Activated CD4-positive, alpha-beta T cell treated with anti-CD3 and anti-CD28 coated beads for 36 hours (primary cell): ENCODE measurements at regions of chrX and their contacts with region 1.

Region 1: GRCh38 chrX:65985922-65986588 is 53.8 kb downstream of the VSIG4 start:
- DNase-seq: peak; percentile 65
- ATAC-seq: peak; percentile 100
- H3K4me3 Mint-ChIP-seq: no peak overlapping the region
- H3K27ac Mint-ChIP-seq: peak overlapping the region; percentile 69
- H3K4me1 Mint-ChIP-seq: peaks cover 21% of the 10 kb centered on the region
- H3K27me3 Mint-ChIP-seq: no peaks in the 10 kb centered on the region

Region 2: GRCh38 chrX:65392284-65392683 is 593.8 kb before region 1 on chrX:
- CTCF ChIA-PET with region 1: no interaction called
- POLR2A ChIA-PET with region 1: no interaction called
- intact Hi-C with region 1: no loop called
- DNase-seq: no peak
- ATAC-seq: no peak
- H3K4me3 Mint-ChIP-seq: no peak overlapping the region
- H3K27ac Mint-ChIP-seq: no peak overlapping the region
- H3K4me1 Mint-ChIP-seq: no peaks in the 10 kb centered on the region
- H3K27me3 Mint-ChIP-seq: no peaks in the 10 kb centered on the region

Region 3: GRCh38 chrX:65581661-65582339 is 404.3 kb before region 1 on chrX:
- CTCF ChIA-PET with region 1: interaction called, 9 read pairs
- POLR2A ChIA-PET with region 1: interaction called, 3 read pairs
- intact Hi-C with region 1: loop called (anchors 1 kb)
- DNase-seq: peak; percentile 70
- ATAC-seq: peak; percentile 64
- H3K4me3 Mint-ChIP-seq: no peak overlapping the region
- H3K27ac Mint-ChIP-seq: no peak overlapping the region
- H3K4me1 Mint-ChIP-seq: peaks cover 8% of the 10 kb centered on the region
- H3K27me3 Mint-ChIP-seq: no peaks in the 10 kb centered on the region

Region 4: DNA sequence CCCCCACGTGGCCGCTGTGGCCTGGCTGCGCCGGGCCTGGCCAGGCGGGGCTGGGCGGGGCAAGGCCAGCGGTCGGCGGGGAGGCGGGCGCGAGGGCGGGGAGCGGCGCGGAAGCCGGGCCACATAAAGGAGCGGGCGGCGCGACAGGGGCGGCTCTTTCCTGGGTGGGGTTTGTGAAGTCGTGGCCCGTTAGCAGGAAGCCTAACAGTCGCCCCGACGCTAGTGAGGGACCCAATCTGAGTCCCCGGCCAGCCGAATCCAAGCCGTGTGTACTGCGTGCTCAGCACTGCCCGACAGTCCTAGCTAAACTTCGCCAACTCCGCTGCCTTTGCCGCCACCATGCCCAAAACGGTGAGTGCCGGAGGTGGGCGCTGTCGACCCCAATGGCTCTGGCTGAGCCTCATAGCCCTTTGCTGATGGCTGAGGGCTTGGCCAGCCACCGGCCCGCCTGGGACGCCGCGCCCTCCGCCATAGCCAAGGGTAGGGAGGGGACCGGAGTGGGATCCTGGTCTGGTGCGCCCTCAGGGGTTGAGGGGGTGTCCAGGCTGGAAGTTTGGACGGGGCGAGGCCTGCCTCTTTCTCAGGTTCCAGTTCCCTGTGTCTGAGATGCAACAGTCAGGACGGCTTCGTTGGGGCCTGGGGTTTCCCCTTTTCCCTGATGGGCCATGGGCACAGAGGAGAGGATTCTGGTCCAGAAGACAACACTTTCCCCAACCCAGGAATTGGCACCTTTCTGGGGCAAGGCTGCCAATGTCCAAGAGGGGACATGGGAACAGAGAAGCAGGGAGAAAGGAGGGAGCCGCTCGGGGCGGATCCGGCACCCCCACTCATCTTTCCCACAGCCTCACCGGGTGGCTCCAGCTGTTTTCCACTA is 318.3 kb before region 1 on chrX and contains the start of gene MSN:
- CTCF ChIA-PET with region 1: interaction called, 3 read pairs
- POLR2A ChIA-PET with region 1: no interaction called
- intact Hi-C with region 1: loop called in 1 of 2 experiments (anchors 5 kb)
- DNase-seq: peak; percentile 87
- ATAC-seq: peak; percentile 67
- H3K4me3 Mint-ChIP-seq: peak within 1 kb of the TSS; percentile 91
- H3K27ac Mint-ChIP-seq: peak within 1 kb of the TSS; percentile 96
- H3K4me1 Mint-ChIP-seq: peaks cover 28% of the 10 kb centered on the region
- H3K27me3 Mint-ChIP-seq: no peaks in the 10 kb centered on the region
- total RNA-seq, gene MSN: 476 to 609 TPM

Region 5: GRCh38 chrX:65723706-65724105 is 262.3 kb before region 1 on chrX:
- CTCF ChIA-PET with region 1: no interaction called
- POLR2A ChIA-PET with region 1: no interaction called
- intact Hi-C with region 1: loop called in 1 of 2 experiments (anchors 5 kb)
- DNase-seq: peak; percentile 60
- ATAC-seq: peak; percentile 86
- H3K4me3 Mint-ChIP-seq: peak overlapping the region; percentile 19
- H3K27ac Mint-ChIP-seq: peak overlapping the region; percentile 88
- H3K4me1 Mint-ChIP-seq: peaks cover 87% of the 10 kb centered on the region
- H3K27me3 Mint-ChIP-seq: no peaks in the 10 kb centered on the region

Region 6: GRCh38 chrX:65750674-65751469 is 235.2 kb before region 1 on chrX:
- CTCF ChIA-PET with region 1: interaction called, 3 read pairs
- POLR2A ChIA-PET with region 1: no interaction called
- intact Hi-C with region 1: loop called in 1 of 2 experiments (anchors 5 kb)
- DNase-seq: peak; percentile 47
- ATAC-seq: peak; percentile 82
- H3K4me3 Mint-ChIP-seq: no peak overlapping the region
- H3K27ac Mint-ChIP-seq: peak overlapping the region; percentile 31
- H3K4me1 Mint-ChIP-seq: peaks cover 55% of the 10 kb centered on the region
- H3K27me3 Mint-ChIP-seq: no peaks in the 10 kb centered on the region

Region 7: DNA sequence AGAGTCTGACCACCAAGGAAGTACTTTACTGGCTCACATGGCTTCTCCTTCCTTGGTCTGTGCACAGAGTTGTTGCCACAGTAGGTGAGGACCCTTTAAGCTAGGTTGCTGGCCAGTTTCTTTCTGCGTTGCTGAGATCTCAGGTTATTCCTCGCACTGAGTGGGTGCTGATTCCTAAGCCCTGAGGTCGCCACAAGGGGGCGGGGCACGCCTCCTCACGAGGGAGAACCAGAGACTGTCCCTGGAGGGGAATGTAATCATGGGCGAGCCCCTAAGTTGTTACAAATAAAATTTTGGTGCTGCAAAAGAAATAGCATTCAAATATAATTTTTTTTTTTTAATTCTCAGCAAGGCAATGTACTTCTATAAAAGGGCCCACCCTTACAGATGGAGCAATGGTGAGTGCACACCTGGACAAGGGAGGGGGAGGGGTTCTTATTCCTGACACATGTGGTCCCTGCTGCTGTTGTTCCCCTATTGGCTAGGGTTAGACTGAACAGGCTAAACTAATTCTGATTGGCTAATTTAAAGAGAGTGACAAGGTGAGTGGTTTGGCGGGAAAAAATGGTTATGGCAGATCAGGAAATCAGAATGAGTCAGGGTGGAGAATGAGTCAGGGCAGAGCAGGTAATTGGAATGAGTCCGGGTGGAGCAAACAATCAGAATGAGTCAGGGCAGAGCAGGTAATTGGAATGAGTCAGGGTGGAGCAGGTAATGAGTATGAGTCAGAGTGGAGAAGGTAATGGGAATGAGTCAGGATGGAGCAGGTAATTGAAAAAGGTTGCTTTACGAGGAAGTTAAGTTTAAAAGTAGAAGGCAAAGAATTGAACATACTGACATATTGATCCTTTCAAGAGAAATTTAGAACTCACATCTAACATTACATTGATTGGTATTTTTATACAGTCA is 53.6 kb before region 1 on chrX:
- CTCF ChIA-PET with region 1: no interaction called
- POLR2A ChIA-PET with region 1: no interaction called
- intact Hi-C with region 1: loop called in 1 of 2 experiments (anchors 1 kb)
- DNase-seq: peak; percentile 57
- ATAC-seq: peak; percentile 98
- H3K4me3 Mint-ChIP-seq: no peak overlapping the region
- H3K27ac Mint-ChIP-seq: peak overlapping the region; percentile 53
- H3K4me1 Mint-ChIP-seq: peaks cover 13% of the 10 kb centered on the region
- H3K27me3 Mint-ChIP-seq: no peaks in the 10 kb centered on the region

Region 8: GRCh38 chrX:66110112-66110511 is 124.1 kb after region 1 on chrX:
- CTCF ChIA-PET with region 1: no interaction called
- POLR2A ChIA-PET with region 1: no interaction called
- intact Hi-C with region 1: loop called in 1 of 2 experiments (anchors 2 kb)
- DNase-seq: peak; percentile 16
- ATAC-seq: no peak
- H3K4me3 Mint-ChIP-seq: no peak overlapping the region
- H3K27ac Mint-ChIP-seq: no peak overlapping the region
- H3K4me1 Mint-ChIP-seq: no peaks in the 10 kb centered on the region
- H3K27me3 Mint-ChIP-seq: no peaks in the 10 kb centered on the region